HAP-1 (cell line): ENCODE measurements at regions of chr14 and their contacts with region 1.

Region 1: GRCh38 chr14:103576371-103577024 is 13.7 kb downstream of the COA8 start:
- DNase-seq: peak; percentile 72 to 90
- H3K4me3 ChIP-seq: no peak overlapping the region
- H3K4me1 ChIP-seq: peaks cover 4% of the 10 kb centered on the region
- H3K27me3 ChIP-seq: no peaks in the 10 kb centered on the region

Region 2: GRCh38 chr14:103346286-103346685 is 230.2 kb before region 1 on chr14:
- in situ Hi-C with region 1: no loop called
- DNase-seq: no peak
- H3K4me3 ChIP-seq: no peak overlapping the region
- H3K4me1 ChIP-seq: no peaks in the 10 kb centered on the region
- H3K27me3 ChIP-seq: no peaks in the 10 kb centered on the region

Region 3: DNA sequence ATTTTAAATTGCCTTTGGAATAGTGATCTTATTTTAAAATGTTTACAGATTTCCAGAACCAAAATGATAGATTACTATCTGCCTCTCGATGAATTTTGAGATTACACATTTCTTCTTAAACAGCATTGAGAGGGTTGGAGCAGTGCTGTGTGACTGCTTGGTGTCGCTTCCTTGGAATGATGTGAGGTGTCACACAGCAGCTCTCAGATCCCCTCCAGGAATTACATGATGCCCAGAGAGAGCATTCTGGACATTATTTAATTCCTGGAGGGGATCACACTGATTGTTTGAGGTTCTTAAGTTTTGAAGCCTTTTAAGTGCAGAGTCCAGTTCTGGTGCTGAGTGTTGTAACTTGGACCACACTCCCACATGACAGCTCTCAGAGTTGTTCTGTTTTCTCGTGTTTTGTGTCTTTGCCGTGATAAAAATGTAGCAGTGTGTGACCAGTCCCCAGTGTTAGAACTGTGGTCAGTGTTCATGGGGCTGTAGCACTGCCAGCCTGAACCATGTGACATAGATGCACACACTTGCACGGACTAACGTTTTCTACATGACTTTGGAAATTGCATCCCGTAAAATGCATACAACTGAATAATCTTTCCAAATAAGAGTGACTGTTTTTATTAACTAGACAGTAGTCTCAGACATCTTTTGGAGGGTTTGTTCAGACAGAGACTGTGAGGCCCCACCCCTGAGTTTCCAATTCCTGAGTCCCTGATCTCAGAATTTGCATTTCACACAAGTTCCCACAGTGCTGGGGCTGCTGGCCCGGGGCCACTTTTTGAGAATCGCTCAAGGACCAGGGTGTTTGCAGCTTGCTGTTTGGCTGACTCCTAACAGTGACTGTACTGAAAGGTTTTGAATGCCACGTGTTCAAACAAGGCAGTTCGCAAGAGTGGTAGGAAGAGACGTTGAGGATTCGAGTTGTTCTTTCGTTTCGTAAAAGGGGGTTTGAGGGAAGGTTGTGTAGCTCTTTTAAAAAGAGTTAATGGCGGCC is 112.7 kb after region 1 on chr14:
- in situ Hi-C with region 1: loop called (anchors 10 kb)
- DNase-seq: no peak
- H3K4me3 ChIP-seq: no peak overlapping the region
- H3K4me1 ChIP-seq: no peaks in the 10 kb centered on the region
- H3K27me3 ChIP-seq: no peaks in the 10 kb centered on the region